ENCODE measurements at regions of chr10 and their contacts with region 1.

Region 1: GRCh38 chr10:19788075-19788686 is 28.1 kb upstream of the PLXDC2 start:
- DNase-seq: peak; percentile 64
- H3K4me3 Mint-ChIP-seq: no peak overlapping the region
- H3K27ac Mint-ChIP-seq: no peak overlapping the region
- H3K4me1 Mint-ChIP-seq: peaks cover 23% of the 10 kb centered on the region
- H3K27me3 Mint-ChIP-seq: no peaks in the 10 kb centered on the region
- CTCF ChIP-seq: peak; percentile 76

Region 2: DNA sequence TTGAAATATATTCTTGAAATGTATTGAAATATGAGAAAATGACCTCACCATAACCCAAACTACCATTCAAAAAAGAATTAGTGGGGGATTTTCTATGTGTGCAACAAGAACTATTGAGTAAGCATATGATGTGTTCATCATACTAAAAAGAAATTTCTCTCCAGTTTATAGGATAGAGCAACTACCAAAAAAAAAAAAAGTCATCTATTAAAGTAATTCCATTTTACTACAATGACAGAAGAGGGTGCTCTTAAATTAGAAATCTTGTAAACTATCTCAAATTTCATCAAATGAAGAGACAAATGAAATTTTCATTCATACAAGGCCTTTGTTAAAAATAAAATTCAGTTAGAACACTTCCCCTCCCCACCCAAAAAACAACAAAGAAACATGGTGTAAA is 167.4 kb before region 1 on chr10:
- CTCF ChIA-PET with region 1: interaction called, 4 read pairs
- POLR2A ChIA-PET with region 1: no interaction called
- intact Hi-C with region 1: loop called (anchors 1 kb)
- DNase-seq: no peak
- H3K4me3 Mint-ChIP-seq: no peak overlapping the region
- H3K27ac Mint-ChIP-seq: no peak overlapping the region
- H3K4me1 Mint-ChIP-seq: no peaks in the 10 kb centered on the region
- H3K27me3 Mint-ChIP-seq: no peaks in the 10 kb centered on the region
- CTCF ChIP-seq: peak; percentile 28

Measured in MCF 10A (cell line).